ENCODE measurements at regions of chrX and their contacts with region 1.

Region 1: GRCh38 chrX:130091958-130092522 is 18.3 kb downstream of the ELF4 start:
- DNase-seq: peak; percentile 62 to 95 (median 82)
- ATAC-seq: peak; percentile 97
- H3K4me3 ChIP-seq: peak overlapping the region; percentile 63
- H3K4me3 Mint-ChIP-seq: peak overlapping the region; percentile 92
- H3K27ac ChIP-seq: peak overlapping the region; percentile 55 to 68
- H3K27ac Mint-ChIP-seq: peak overlapping the region; percentile 96
- H3K4me1 ChIP-seq: peaks cover 91% of the 10 kb centered on the region
- H3K4me1 Mint-ChIP-seq: peaks cover 56% of the 10 kb centered on the region
- H3K27me3 ChIP-seq: no peaks in the 10 kb centered on the region
- H3K27me3 Mint-ChIP-seq: no peaks in the 10 kb centered on the region
- CTCF ChIP-seq: peak; percentile 21

Region 2: DNA sequence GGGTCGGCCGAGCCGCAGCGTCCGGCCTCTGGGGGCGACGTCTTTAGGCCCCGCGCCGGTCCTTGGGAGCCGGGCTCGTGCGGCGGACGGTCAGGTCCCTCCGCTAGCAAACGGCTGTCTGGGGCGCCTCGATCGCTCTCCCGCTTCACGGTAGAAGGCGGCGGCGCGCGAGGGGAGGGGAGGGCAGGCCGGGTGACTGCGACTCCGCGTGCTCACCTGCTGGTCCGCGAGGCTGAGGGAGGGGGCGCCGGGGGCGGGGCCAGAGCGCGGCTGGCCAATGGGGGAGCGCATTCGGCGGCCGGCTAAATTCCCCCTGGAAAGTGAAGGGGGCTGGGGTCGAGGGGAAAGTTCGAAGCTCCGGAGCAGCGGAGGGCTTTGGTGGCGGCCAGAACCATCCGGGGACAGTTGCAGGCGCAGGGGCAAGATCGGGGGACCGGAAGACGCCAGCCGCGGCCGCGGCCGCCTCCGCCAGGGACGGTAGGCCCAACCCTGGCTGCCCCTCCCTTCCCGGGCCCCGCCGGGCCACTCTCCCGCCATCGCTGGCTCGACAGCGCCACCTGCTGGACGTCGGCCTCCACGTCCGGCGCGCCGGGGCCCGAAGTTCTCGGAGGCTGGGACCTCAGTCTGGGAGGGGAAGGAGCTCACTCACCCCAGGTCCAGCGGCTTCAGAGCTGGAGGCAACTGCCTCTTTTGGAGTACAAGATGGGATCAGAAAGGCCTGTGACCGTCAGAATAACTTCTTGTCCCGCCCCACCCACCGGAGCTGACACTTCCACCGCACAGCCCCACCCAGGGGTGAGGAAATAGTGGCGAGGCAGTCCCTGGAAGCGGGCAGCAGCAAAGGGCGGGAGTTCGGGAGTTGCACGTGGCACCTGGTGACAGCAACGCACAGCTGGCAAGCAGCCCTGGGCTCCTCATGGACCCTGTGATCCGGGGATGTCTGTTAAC is 31.6 kb before region 1 on chrX:
- CTCF ChIA-PET with region 1: no interaction called
- POLR2A ChIA-PET with region 1: no interaction called
- intact Hi-C with region 1: no loop called
- DNase-seq: peak; percentile 50 to 87 (median 77)
- ATAC-seq: peak; percentile 82
- H3K4me3 ChIP-seq: peak overlapping the region; percentile 45
- H3K4me3 Mint-ChIP-seq: peak overlapping the region; percentile 71
- H3K27ac ChIP-seq: no peak overlapping the region
- H3K27ac Mint-ChIP-seq: no peak overlapping the region
- H3K4me1 ChIP-seq: peaks cover 13% of the 10 kb centered on the region
- H3K4me1 Mint-ChIP-seq: peaks cover 10% of the 10 kb centered on the region
- H3K27me3 ChIP-seq: no peaks in the 10 kb centered on the region
- H3K27me3 Mint-ChIP-seq: no peaks in the 10 kb centered on the region
- CTCF ChIP-seq: peak; percentile 78

Region 3: DNA sequence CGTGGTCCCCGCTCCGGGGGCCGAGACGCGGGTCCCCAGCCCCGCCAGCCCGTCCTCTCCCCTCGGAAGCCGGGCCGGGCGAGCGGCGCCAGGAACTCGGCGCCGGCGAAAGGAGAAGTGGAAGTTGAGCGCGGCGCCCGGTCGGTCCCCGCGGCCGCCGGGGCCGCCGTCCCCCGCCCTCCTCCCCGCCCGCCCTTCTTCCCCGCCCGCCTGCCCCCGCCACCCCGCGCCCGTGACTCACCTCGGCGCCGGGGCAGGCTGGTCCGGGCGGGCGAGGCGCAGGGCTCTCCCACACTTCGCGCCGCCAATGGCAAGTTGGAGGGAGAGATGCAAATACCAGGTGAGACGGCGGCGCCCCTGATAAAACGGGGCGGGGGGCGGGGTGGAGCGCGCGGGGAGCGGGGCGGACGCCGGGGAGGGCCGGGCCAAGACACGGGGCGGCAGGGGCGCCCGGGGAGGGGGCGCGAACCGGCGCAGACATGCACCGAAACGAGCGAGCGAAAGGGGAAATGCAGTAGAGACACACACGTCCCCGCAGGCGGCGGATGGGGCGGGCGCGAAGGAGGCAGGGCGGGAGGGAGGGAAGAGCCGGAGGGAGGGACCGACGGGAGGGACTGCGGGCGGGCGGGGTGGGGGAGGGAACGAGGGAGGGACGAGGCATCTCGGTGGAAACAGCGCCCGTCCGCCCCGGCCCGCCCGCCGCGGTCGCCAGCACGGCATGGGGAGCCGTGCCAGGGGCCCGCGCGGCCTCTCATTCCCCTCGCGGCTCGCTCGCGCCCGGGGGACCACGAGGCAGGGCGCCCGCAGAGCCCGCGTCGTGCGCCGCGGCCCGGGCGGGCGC is 18.6 kb after region 1 on chrX and contains the start of gene ELF4:
- CTCF ChIA-PET with region 1: interaction called, 10 read pairs
- POLR2A ChIA-PET with region 1: interaction called, 13 read pairs
- intact Hi-C with region 1: no loop called
- DNase-seq: peak in 12 of 14 experiments; percentile 19 to 85 (median 57)
- ATAC-seq: peak; percentile 76
- H3K4me3 ChIP-seq: peak within 1 kb of the TSS; percentile 83
- H3K4me3 Mint-ChIP-seq: peak within 1 kb of the TSS; percentile 95
- H3K27ac ChIP-seq: peak within 1 kb of the TSS; percentile 50 to 52
- H3K27ac Mint-ChIP-seq: peak within 1 kb of the TSS; percentile 82
- H3K4me1 ChIP-seq: peaks cover 37% of the 10 kb centered on the region
- H3K4me1 Mint-ChIP-seq: peaks cover 25% of the 10 kb centered on the region
- H3K27me3 ChIP-seq: no peaks in the 10 kb centered on the region
- H3K27me3 Mint-ChIP-seq: no peaks in the 10 kb centered on the region
- CTCF ChIP-seq: no peak
- total RNA-seq, gene ELF4: 17.3 to 17.4 TPM

Region 4: DNA sequence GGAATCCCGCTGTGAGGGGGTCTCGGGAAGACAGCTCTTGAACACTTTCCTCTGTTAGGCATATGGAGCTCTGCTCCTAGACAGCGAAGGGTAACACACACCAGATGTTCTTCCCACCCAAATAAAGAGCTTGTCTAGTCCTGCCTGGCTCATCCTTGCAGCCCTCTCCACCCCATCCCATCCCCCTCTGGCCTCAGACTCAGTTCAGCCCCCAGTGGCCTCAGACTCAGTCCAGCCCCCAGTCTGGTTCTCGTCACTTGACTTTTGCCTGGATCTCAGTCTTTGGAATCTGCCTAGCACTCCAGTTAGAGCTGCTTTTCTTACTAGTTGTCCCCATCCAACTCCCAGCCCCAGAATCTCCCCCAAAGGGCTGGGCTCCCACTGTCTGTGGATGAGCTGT is 94.6 kb after region 1 on chrX:
- CTCF ChIA-PET with region 1: no interaction called
- POLR2A ChIA-PET with region 1: no interaction called
- intact Hi-C with region 1: no loop called
- DNase-seq: no peak
- ATAC-seq: no peak
- H3K4me3 ChIP-seq: no peak overlapping the region
- H3K4me3 Mint-ChIP-seq: no peak overlapping the region
- H3K27ac ChIP-seq: no peak overlapping the region
- H3K27ac Mint-ChIP-seq: peak overlapping the region; percentile 0
- H3K4me1 ChIP-seq: peaks cover 17% of the 10 kb centered on the region
- H3K4me1 Mint-ChIP-seq: peaks cover 11% of the 10 kb centered on the region
- H3K27me3 ChIP-seq: no peaks in the 10 kb centered on the region
- H3K27me3 Mint-ChIP-seq: no peaks in the 10 kb centered on the region
- CTCF ChIP-seq: no peak

Measured in CD4-positive, alpha-beta T cell (primary cell).